Right ventricle myocardium inferior (tissue), 1 donor: ENCODE measurements at regions of chr6 and their contacts with region 1.

Region 1: GRCh38 chr6:29792123-29793035 is 35.2 kb upstream of the HLA-G start:
- DNase-seq: peak; percentile 88
- ATAC-seq: peak; percentile 96

Region 2: DNA sequence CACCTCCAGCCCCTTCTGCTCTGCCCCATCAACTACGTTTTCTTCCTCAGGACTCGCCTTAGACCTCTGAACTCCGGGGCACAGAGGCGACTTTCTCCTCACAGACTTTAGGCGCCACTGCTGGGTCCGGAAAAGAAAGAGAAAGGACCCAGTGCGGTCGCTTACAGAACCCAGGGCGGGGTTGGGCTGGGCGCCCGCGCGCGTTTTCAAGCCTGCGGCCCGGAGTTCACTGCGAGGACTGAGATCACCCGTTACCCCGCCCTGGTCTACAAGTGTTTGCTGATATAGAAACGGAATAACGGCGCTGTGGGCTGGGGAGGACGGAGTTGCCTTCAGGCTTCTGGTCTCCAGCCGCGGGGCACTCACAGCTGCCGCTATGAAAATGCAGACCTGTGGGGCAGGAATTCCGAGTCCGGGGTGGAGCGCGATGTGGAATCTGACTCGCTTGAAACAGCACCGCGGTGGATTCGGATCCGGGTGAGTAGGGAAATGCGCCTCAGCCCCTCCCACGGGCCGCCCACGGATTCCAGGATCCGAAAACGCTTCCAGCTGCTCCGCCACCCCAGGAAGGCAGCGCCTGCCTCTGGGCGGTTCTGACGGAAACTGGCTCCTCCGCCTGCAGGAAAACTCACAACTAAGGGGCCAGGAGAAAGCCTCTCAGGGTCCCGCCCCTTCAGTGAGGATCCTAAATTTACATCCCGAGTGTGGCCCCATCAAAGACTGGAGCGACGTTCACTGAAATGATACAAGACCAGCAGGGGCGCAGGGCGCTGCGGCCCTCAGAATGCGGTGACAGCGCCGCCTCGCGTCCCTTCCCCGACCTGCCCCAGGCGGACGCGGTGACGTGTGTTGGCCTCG is 39.7 kb before region 1 on chr6:
- intact Hi-C with region 1: loop called (anchors 5 kb)
- DNase-seq: peak; percentile 96
- ATAC-seq: peak; percentile 87

Region 3: DNA sequence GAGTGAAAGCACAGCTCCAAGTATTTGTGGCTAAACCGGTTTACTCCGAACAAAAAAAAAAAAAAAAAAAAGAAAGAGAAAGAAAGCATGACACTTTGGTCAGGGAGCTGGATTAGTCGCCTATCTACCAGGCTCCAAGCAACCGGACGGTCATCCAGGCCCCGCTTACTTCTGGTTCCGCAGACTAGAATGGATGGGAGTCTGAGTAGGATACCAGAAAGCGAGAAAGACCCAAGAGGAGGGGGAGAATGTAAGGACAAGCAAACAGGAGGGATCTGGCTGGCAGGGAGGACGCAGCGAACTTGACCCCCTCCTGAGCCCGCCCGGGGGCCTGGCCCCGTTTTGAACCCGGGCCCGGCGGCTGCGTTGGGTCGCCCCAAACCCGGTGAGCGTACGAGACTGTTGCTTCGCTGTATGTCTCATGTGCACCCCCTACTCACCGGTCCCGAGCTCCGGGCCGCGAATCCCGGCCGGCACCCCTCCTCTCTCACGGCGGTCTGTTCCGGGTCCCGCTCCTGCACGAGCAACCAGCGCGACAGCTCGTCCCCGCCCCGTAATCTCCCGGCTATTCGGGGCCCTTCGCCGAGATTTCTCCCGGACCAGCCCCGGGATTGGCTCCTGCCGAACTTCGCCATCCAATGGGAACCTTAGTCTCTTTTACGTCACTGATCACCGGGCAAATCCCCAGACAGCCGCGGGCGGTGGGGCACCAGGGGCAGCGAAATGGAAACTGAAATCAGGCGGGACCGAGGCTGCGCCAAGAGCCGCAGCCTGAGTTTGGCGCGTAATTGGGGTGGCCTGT is 420.7 kb after region 1 on chr6 and contains the start of gene TRIM26:
- intact Hi-C with region 1: no loop called
- DNase-seq: peak; percentile 97
- ATAC-seq: peak; percentile 97
- total RNA-seq, gene TRIM26: 20.6 TPM